Stomach (tissue), 19 donors: ENCODE measurements at regions of chr14 and their contacts with region 1.

Region 1: DNA sequence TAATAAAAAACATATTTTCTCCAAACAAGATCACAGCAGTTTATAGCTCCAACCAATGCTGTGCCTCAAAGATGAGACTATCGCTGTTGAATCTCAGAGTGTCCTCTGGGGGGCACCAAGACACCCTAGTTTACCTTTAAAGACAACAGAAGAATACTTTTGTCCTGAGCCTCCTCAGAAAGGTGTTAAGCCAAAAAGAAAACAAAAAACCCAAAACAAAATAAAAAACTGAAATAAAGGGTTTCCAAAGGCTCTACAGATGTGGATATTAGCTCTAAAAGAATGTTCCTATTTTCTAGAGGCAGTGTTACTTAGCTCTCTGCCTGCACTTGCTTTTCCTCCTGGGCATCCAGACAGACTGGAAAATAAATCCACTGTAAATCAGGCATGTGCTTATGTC is 86.9 kb upstream of the TTC7B start:
- DNase-seq: peak; percentile 46 to 82
- H3K4me3 ChIP-seq: no peak overlapping the region
- H3K27ac ChIP-seq: no peak overlapping the region
- H3K4me1 ChIP-seq: peaks cover 0 to 3% (median 0%) of the 10 kb centered on the region in 4 donors
- H3K27me3 ChIP-seq: no peaks in the 10 kb centered on the region
- CTCF ChIP-seq: peak in 5 of 7 experiments; percentile 46 to 66 (median 60)
- EP300 ChIP-seq: no peak
- POLR2A ChIP-seq: no peak

Region 2: GRCh38 chr14:91177073-91178034 is 274.3 kb after region 1 on chr14:
- intact Hi-C with region 1: loop called (anchors 5 kb)
- DNase-seq: peak; percentile 65 to 84
- H3K4me3 ChIP-seq: no peak overlapping the region
- H3K27ac ChIP-seq: peak overlapping the region in 3 of 5 donors; percentile 11 to 47 (median 44)
- H3K4me1 ChIP-seq: peaks cover 0 to 22% (median 10%) of the 10 kb centered on the region in 4 donors
- H3K27me3 ChIP-seq: no peaks in the 10 kb centered on the region
- CTCF ChIP-seq: peak in 5 of 7 experiments; percentile 57 to 77 (median 65)
- EP300 ChIP-seq: no peak
- POLR2A ChIP-seq: no peak

Region 3: GRCh38 chr14:91286530-91286937 is 383.4 kb after region 1 on chr14:
- intact Hi-C with region 1: loop called (anchors 10 kb)
- DNase-seq: peak; percentile 82 to 86
- H3K4me3 ChIP-seq: no peak overlapping the region
- H3K27ac ChIP-seq: no peak overlapping the region
- H3K4me1 ChIP-seq: peaks cover 6 to 21% (median 15%) of the 10 kb centered on the region in 4 donors
- H3K27me3 ChIP-seq: no peaks in the 10 kb centered on the region
- CTCF ChIP-seq: peak in 5 of 7 experiments; percentile 83 to 96 (median 86)
- EP300 ChIP-seq: no peak
- POLR2A ChIP-seq: no peak